Caco-2 (cell line): ENCODE measurements at regions of chr7 and their contacts with region 1.

Region 1: DNA sequence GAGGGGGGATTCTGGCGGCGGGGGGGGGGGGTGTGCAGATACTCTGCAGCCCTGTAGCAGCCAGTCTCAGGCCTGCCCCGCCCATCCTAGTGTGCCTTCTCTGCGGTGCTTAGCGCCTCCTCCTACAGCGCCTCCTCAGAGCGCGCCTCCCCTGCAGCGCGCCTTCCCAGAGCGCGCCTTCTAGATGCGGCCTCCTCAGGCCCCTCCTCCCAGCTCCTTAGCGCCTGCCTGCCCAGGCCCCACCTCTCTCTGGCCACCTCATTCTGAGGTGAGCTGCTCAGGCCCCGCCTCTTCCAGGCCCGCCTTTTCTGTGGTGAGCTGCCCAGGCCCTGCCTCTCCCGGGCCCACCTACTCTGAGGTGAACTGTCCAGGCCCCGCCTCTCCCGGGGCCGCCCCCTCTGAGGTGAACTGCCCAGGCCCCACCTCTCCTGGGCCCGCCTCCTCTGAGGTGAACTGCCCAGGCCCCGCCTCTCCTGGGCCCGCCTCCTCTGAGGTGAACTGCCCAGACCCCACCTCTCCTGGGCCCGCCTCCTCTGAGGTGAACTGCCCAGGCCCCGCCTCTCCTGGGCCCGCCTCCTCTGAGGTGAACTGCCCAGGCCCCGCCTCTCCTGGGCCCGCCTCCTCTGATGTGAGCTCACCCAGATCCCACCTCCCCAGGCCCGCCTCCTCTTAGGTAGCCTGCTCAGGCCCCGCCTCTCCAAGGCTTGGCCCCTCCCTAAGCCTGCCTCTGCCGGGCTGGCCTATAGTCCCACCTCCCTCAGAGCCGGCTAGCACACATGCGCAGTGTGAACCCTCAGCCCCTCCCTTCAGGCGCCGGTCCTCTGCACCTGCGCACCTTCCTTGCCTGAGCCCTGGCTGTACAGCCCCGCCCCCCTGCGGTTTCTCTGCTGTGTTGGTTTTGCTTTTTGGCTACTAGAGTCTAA is 2.1 kb upstream of the SGCE start:
- DNase-seq: peak; percentile 100
- H3K4me3 ChIP-seq: peak overlapping the region; percentile 79
- H3K4me3 Mint-ChIP-seq: peak overlapping the region; percentile 88
- H3K27ac Mint-ChIP-seq: peak overlapping the region; percentile 72
- H3K4me1 ChIP-seq: no peaks in the 10 kb centered on the region
- H3K4me1 Mint-ChIP-seq: peaks cover 6% of the 10 kb centered on the region
- H3K27me3 ChIP-seq: no peaks in the 10 kb centered on the region
- H3K27me3 Mint-ChIP-seq: no peaks in the 10 kb centered on the region
- CTCF ChIP-seq: peak in 1 of 2 experiments; percentile 27

Region 2: DNA sequence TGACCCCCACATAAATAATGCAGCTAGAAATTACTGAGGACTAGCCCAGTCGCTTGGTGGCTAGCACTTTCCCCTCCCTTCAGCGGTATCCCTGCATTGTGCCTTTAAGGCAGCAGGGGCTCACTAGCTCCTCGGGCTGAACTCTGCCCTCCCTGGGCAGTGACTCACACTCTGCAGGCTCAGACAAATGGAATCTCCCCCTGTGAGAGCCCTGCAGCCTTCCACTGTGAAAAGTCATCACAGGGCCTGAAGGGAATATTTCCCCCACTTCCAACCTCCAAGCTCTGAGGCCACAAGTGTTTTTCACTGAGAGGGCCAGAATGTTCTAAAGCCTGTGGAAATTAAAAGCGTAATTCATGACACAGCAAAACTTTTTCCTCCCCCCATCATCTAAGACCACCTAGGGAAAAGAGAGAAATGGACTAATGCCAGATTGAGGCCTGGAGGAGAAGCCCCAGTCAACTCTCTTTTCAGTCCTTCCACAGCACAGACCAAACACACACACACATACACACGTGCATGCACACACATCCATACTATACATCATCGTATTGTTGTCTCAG is 356.9 kb before region 1 on chr7:
- CTCF ChIA-PET with region 1: no interaction called
- POLR2A ChIA-PET with region 1: no interaction called
- intact Hi-C with region 1: loop called (anchors 10 kb)
- DNase-seq: peak; percentile 79 to 88
- H3K4me3 ChIP-seq: no peak overlapping the region
- H3K4me3 Mint-ChIP-seq: peak overlapping the region; percentile 32
- H3K27ac Mint-ChIP-seq: peak overlapping the region; percentile 90
- H3K4me1 ChIP-seq: peaks cover 43% of the 10 kb centered on the region
- H3K4me1 Mint-ChIP-seq: peaks cover 31% of the 10 kb centered on the region
- H3K27me3 ChIP-seq: no peaks in the 10 kb centered on the region
- H3K27me3 Mint-ChIP-seq: no peaks in the 10 kb centered on the region
- CTCF ChIP-seq: peak in 1 of 2 experiments; percentile 19

Region 3: GRCh38 chr7:94449148-94449725 is 208.8 kb before region 1 on chr7:
- CTCF ChIA-PET with region 1: interaction called, 29 read pairs
- POLR2A ChIA-PET with region 1: interaction called, 15 read pairs
- intact Hi-C with region 1: loop called (anchors 1 kb)
- DNase-seq: peak in 1 of 2 experiments; percentile 24
- H3K4me3 ChIP-seq: no peak overlapping the region
- H3K4me3 Mint-ChIP-seq: no peak overlapping the region
- H3K27ac Mint-ChIP-seq: no peak overlapping the region
- H3K4me1 ChIP-seq: peaks cover 15% of the 10 kb centered on the region; the same call in 1 of the 2 replicates
- H3K4me1 Mint-ChIP-seq: peaks cover 19% of the 10 kb centered on the region
- H3K27me3 ChIP-seq: no peaks in the 10 kb centered on the region
- H3K27me3 Mint-ChIP-seq: no peaks in the 10 kb centered on the region
- CTCF ChIP-seq: peak; percentile 52 to 53

Region 4: GRCh38 chr7:94561841-94562514 is 96.1 kb before region 1 on chr7:
- CTCF ChIA-PET with region 1: interaction called, 3 read pairs
- POLR2A ChIA-PET with region 1: no interaction called
- intact Hi-C with region 1: loop called (anchors 5 kb)
- DNase-seq: no peak
- H3K4me3 ChIP-seq: no peak overlapping the region
- H3K4me3 Mint-ChIP-seq: no peak overlapping the region
- H3K27ac Mint-ChIP-seq: no peak overlapping the region
- H3K4me1 ChIP-seq: peaks cover 32% of the 10 kb centered on the region
- H3K4me1 Mint-ChIP-seq: peaks cover 10% of the 10 kb centered on the region
- H3K27me3 ChIP-seq: no peaks in the 10 kb centered on the region
- H3K27me3 Mint-ChIP-seq: no peaks in the 10 kb centered on the region
- CTCF ChIP-seq: no peak

Region 5: DNA sequence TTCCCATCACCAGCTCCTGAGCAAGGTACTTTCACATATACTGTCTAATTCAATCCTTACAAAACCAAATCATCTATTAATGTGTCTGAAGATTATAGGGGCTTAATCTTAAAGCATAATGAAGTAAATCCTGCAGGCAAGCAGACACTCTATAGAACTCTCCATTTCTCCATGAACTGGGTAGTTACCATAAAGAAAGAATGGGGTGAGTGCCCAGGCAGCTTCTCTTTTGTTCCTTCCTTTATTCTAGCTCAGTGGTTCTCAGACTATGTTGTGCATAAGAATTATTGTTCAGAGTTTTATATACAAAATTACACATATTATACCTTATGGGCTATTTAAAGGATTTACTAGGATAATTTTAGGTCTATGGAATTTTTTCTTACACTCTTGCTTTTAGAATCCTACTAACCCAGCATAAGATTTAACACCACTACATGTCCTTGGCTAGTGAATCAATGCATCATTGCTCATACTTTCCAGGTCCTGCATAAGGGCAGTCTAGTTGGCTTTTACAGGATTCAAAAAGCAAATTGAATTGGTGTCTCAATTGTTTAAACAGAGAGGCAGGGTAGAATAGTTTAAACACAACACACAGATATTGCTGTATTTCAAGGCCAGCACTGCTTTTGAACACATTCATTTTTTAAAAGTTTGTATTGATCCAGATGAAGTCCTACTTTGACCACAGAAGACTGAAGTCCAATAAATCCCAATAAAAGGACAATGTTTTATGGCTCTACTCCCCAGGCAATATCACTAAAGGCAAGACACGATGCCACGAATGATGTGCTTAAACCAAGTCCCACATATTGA is 15.0 kb before region 1 on chr7:
- CTCF ChIA-PET with region 1: interaction called, 11 read pairs
- POLR2A ChIA-PET with region 1: no interaction called
- intact Hi-C with region 1: no loop called
- DNase-seq: no peak
- H3K4me3 ChIP-seq: no peak overlapping the region
- H3K4me3 Mint-ChIP-seq: no peak overlapping the region
- H3K27ac Mint-ChIP-seq: no peak overlapping the region
- H3K4me1 ChIP-seq: no peaks in the 10 kb centered on the region
- H3K4me1 Mint-ChIP-seq: no peaks in the 10 kb centered on the region
- H3K27me3 ChIP-seq: no peaks in the 10 kb centered on the region
- H3K27me3 Mint-ChIP-seq: no peaks in the 10 kb centered on the region
- CTCF ChIP-seq: no peak

Region 6: GRCh38 chr7:94763268-94763667 is 105.2 kb after region 1 on chr7:
- CTCF ChIA-PET with region 1: no interaction called
- POLR2A ChIA-PET with region 1: no interaction called
- intact Hi-C with region 1: no loop called
- DNase-seq: no peak
- H3K4me3 ChIP-seq: no peak overlapping the region
- H3K4me3 Mint-ChIP-seq: no peak overlapping the region
- H3K27ac Mint-ChIP-seq: no peak overlapping the region
- H3K4me1 ChIP-seq: no peaks in the 10 kb centered on the region
- H3K4me1 Mint-ChIP-seq: no peaks in the 10 kb centered on the region
- H3K27me3 ChIP-seq: no peaks in the 10 kb centered on the region
- H3K27me3 Mint-ChIP-seq: no peaks in the 10 kb centered on the region
- CTCF ChIP-seq: no peak

Region 7: GRCh38 chr7:94972296-94972695 is 314.3 kb after region 1 on chr7:
- CTCF ChIA-PET with region 1: no interaction called
- POLR2A ChIA-PET with region 1: no interaction called
- intact Hi-C with region 1: loop called (anchors 5 kb)
- DNase-seq: no peak
- H3K4me3 ChIP-seq: no peak overlapping the region
- H3K4me3 Mint-ChIP-seq: no peak overlapping the region
- H3K27ac Mint-ChIP-seq: no peak overlapping the region
- H3K4me1 ChIP-seq: peaks cover 45% of the 10 kb centered on the region
- H3K4me1 Mint-ChIP-seq: peaks cover 41% of the 10 kb centered on the region
- H3K27me3 ChIP-seq: no peaks in the 10 kb centered on the region
- H3K27me3 Mint-ChIP-seq: no peaks in the 10 kb centered on the region
- CTCF ChIP-seq: no peak

Region 8: GRCh38 chr7:95199779-95200558 is 541.9 kb after region 1 on chr7:
- CTCF ChIA-PET with region 1: interaction called, 4 read pairs
- POLR2A ChIA-PET with region 1: no interaction called
- intact Hi-C with region 1: loop called (anchors 5 kb)
- DNase-seq: peak in 1 of 2 experiments; percentile 48
- H3K4me3 ChIP-seq: no peak overlapping the region
- H3K4me3 Mint-ChIP-seq: no peak overlapping the region
- H3K27ac Mint-ChIP-seq: no peak overlapping the region
- H3K4me1 ChIP-seq: no peaks in the 10 kb centered on the region
- H3K4me1 Mint-ChIP-seq: no peaks in the 10 kb centered on the region
- H3K27me3 ChIP-seq: no peaks in the 10 kb centered on the region
- H3K27me3 Mint-ChIP-seq: no peaks in the 10 kb centered on the region
- CTCF ChIP-seq: peak; percentile 63 to 88